Breast epithelium (tissue), 4 donors: ENCODE measurements at regions of chr12 and their contacts with region 1.

Region 1: GRCh38 chr12:80509781-80510556 is 65.9 kb downstream of the PTPRQ start:
- DNase-seq: no peak
- H3K4me3 ChIP-seq: no peak overlapping the region
- H3K27ac ChIP-seq: no peak overlapping the region
- H3K4me1 ChIP-seq: no peaks in the 10 kb centered on the region
- H3K27me3 ChIP-seq: no peaks in the 10 kb centered on the region
- CTCF ChIP-seq: no peak
- POLR2A ChIP-seq: no peak

Region 2: GRCh38 chr12:79508613-79509012 is 1001.4 kb before region 1 on chr12:
- intact Hi-C with region 1: loop called (anchors 10 kb)
- DNase-seq: no peak
- H3K4me3 ChIP-seq: no peak overlapping the region
- H3K27ac ChIP-seq: no peak overlapping the region
- H3K4me1 ChIP-seq: no peaks in the 10 kb centered on the region
- H3K27me3 ChIP-seq: no peaks in the 10 kb centered on the region
- CTCF ChIP-seq: no peak
- POLR2A ChIP-seq: no peak

Region 3: DNA sequence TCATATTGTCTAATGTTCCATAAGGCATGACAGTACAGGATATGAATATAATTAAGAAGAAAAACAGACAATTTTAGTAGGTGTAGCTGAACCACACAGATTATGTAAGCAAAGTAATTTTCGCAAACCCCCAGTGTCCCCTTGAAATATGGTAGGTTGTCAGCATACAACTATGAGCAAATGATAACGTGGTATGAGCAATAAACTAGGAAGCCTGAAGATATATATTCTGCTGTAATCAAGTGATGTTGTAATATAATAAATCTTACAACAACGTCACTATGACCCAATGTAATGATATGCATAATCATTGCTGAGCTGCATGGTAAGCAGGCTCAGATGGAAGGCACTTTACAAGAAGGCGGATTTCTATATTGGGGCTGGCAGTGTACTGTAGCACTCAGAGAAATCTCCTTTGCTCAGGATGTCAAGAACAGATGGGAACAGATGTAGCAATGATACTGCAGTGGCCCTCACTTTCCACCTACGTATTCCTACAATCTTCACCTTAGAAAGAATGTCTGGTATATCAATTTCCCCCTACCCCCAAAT is 149.6 kb after region 1 on chr12:
- intact Hi-C with region 1: no loop called
- DNase-seq: no peak
- H3K4me3 ChIP-seq: no peak overlapping the region
- H3K27ac ChIP-seq: no peak overlapping the region
- H3K4me1 ChIP-seq: no peaks in the 10 kb centered on the region
- H3K27me3 ChIP-seq: no peaks in the 10 kb centered on the region
- CTCF ChIP-seq: no peak
- POLR2A ChIP-seq: no peak

Region 4: GRCh38 chr12:80802652-80803400 is 292.9 kb after region 1 on chr12:
- intact Hi-C with region 1: no loop called
- DNase-seq: no peak
- H3K4me3 ChIP-seq: no peak overlapping the region
- H3K27ac ChIP-seq: no peak overlapping the region
- H3K4me1 ChIP-seq: no peaks in the 10 kb centered on the region
- H3K27me3 ChIP-seq: no peaks in the 10 kb centered on the region
- CTCF ChIP-seq: no peak
- POLR2A ChIP-seq: no peak

Region 5: GRCh38 chr12:80846952-80847351 is 337.0 kb after region 1 on chr12:
- intact Hi-C with region 1: no loop called
- DNase-seq: no peak
- H3K4me3 ChIP-seq: no peak overlapping the region
- H3K27ac ChIP-seq: no peak overlapping the region
- H3K4me1 ChIP-seq: no peaks in the 10 kb centered on the region
- H3K27me3 ChIP-seq: no peaks in the 10 kb centered on the region
- CTCF ChIP-seq: no peak
- POLR2A ChIP-seq: no peak

Region 6: GRCh38 chr12:81022531-81022930 is 512.6 kb after region 1 on chr12:
- intact Hi-C with region 1: no loop called
- DNase-seq: no peak
- H3K4me3 ChIP-seq: no peak overlapping the region
- H3K27ac ChIP-seq: no peak overlapping the region
- H3K4me1 ChIP-seq: no peaks in the 10 kb centered on the region
- H3K27me3 ChIP-seq: no peaks in the 10 kb centered on the region
- CTCF ChIP-seq: no peak
- POLR2A ChIP-seq: no peak